CD8-positive, alpha-beta memory T cell (primary cell): ENCODE measurements at regions of chr17 and their contacts with region 1.

Region 1: GRCh38 chr17:81025741-81026129 is 9.2 kb upstream of the BAIAP2 start:
- DNase-seq: no peak
- H3K4me3 ChIP-seq: no peak overlapping the region
- H3K4me3 Mint-ChIP-seq: no peak overlapping the region
- H3K27ac ChIP-seq: no peak overlapping the region
- H3K27ac Mint-ChIP-seq: no peak overlapping the region
- H3K4me1 ChIP-seq: peaks cover 5% of the 10 kb centered on the region
- H3K4me1 Mint-ChIP-seq: peaks cover 5 to 13% (median 5%) of the 10 kb centered on the region in 3 donors
- H3K27me3 ChIP-seq: no peaks in the 10 kb centered on the region
- H3K27me3 Mint-ChIP-seq: peaks cover 18 to 20% of the 10 kb centered on the region in 2 donors

Region 2: GRCh38 chr17:80866147-80866793 is 159.5 kb before region 1 on chr17:
- CTCF ChIA-PET with region 1: no interaction called
- POLR2A ChIA-PET with region 1: no interaction called
- DNase-seq: peak; percentile 27 to 80 (median 40)
- H3K4me3 ChIP-seq: no peak overlapping the region
- H3K4me3 Mint-ChIP-seq: no peak overlapping the region
- H3K27ac ChIP-seq: no peak overlapping the region
- H3K27ac Mint-ChIP-seq: peak overlapping the region in 4 of 8 donors; percentile 7 to 65 (median 50)
- H3K4me1 ChIP-seq: peaks cover 26% of the 10 kb centered on the region
- H3K4me1 Mint-ChIP-seq: peaks cover 21 to 41% (median 39%) of the 10 kb centered on the region in 3 donors
- H3K27me3 ChIP-seq: no peaks in the 10 kb centered on the region
- H3K27me3 Mint-ChIP-seq: no peaks in the 10 kb centered on the region

Region 3: GRCh38 chr17:81094509-81095382 is 69.0 kb after region 1 on chr17:
- CTCF ChIA-PET with region 1: interaction called, 30 read pairs
- POLR2A ChIA-PET with region 1: no interaction called
- DNase-seq: peak; percentile 75 to 96 (median 86)
- H3K4me3 ChIP-seq: peak overlapping the region; percentile 47
- H3K4me3 Mint-ChIP-seq: peak overlapping the region; percentile 45 to 88 (median 74)
- H3K27ac ChIP-seq: peak overlapping the region; percentile 76
- H3K27ac Mint-ChIP-seq: peak overlapping the region; percentile 79 to 98 (median 92)
- H3K4me1 ChIP-seq: peaks cover 51% of the 10 kb centered on the region
- H3K4me1 Mint-ChIP-seq: peaks cover 27 to 65% (median 42%) of the 10 kb centered on the region in 3 donors
- H3K27me3 ChIP-seq: no peaks in the 10 kb centered on the region
- H3K27me3 Mint-ChIP-seq: peaks cover 0 to 2% of the 10 kb centered on the region in 2 donors